ENCODE measurements at regions of chr2 and their contacts with region 1.

Region 1: GRCh38 chr2:162123806-162124758 is 28.0 kb downstream of the GCG start:
- DNase-seq: no peak
- ATAC-seq: peak; percentile 54

Region 2: DNA sequence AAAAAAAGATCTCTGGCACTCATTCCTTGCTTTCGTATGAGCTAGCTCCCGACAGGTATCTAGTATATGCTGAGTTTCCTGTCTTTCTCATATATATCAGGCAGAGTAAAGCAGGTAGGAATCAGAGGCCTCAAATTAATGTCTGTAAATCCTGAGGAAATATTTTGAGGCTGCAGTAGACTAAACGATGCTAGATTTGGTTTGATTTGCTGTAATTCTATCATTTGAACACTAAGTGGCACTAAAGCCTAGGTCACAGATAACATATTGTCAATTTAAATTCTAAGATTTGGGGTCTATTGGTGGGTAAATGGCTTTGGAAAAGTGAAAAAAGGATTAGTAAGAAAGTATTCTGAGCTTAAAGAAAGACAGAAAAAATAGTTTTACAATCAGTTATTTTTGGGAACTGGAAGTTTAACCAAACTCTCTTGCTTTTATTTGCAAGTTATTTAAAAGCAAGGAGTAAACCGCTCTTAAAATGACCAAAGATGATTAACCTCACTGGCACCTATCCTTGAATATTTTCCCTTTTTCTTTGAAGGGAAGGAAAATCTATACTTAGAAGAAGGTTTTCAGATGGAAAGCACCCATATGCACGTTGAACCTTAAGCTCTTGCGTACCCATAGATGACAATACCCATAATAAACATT is 537.4 kb before region 1 on chr2:
- intact Hi-C with region 1: loop called in 1 of 2 experiments (anchors 10 kb)
- DNase-seq: no peak
- ATAC-seq: peak; percentile 45

Region 3: DNA sequence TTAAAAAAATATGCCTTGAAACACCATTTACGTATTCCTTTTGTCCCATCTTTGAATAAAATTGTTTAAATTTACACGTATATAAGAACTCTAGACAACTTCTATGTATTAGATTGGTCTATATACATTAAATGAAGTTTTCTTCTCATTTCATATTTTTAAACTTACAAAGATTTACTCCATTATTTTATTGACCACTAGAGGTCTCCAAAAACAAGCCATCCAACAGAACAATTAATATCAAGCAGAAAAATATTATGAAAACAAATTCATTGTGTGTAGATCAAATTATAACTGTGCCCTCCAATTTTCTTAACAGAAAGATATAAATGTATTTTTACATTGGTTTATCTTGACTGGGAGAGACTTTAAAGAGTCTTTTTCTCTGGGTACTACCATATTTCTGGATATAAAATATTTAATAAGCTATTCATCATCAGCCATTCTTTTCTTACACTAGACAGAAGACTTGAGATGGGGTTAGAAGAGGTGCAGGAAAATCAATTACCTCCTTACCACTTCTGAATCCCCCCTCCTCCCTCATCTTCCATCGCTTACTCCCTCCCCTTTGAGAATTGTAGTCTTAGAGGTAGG is 116.5 kb before region 1 on chr2:
- intact Hi-C with region 1: loop called in 1 of 2 experiments (anchors 5 kb)
- DNase-seq: no peak
- ATAC-seq: no peak